ENCODE measurements at regions of chr5 and their contacts with region 1.

Region 1: DNA sequence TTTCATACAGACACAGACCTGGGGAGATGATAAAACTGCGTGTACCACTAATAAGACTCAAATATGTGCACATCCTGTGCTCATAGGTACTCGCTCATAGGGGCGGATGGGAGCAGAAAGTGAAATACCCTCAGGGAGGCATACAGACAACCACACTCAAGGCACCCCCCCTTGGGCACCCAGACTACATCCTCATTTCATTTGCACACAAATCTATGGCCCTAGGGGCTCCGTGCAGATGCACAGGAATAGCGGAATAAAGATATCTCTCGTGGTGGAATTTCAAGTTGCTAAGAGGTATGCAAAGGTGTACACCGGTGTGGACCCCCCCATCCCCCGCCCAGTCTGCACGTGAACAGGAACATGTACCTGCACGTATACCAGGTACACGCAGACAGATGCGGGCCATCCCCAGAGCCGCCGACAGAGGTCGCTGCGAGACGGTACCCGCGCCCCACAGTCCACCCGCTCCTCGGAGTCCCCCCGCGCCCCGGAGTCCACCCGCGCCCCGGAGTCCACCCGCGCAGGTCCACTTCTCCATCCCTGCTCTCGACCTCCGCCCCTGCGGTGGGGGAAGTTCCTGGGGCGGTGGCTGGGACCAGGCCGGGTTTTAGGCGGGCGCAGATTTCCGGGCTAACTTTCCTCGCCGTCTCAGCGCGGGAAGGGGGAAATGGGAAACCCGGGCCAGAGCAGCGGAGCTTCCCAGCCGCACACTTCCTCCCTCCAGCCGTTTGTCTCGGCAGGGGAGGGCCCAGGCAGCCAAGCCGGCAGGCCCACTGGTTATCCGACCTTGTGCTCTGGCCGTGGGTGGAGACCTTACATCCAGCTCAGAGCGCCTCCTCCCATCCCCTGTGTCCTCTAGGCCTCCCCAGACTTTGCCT is 1.0 kb upstream of the IL12B start:
- DNase-seq: no peak
- H3K4me3 ChIP-seq: peak overlapping the region; percentile 54
- CTCF ChIP-seq: peak; percentile 79

Region 2: GRCh38 chr5:159341914-159342313 is 10.6 kb after region 1 on chr5:
- CTCF ChIA-PET with region 1: interaction called, 11 read pairs
- POLR2A ChIA-PET with region 1: no interaction called
- DNase-seq: no peak
- H3K4me3 ChIP-seq: no peak overlapping the region
- CTCF ChIP-seq: no peak

Region 3: DNA sequence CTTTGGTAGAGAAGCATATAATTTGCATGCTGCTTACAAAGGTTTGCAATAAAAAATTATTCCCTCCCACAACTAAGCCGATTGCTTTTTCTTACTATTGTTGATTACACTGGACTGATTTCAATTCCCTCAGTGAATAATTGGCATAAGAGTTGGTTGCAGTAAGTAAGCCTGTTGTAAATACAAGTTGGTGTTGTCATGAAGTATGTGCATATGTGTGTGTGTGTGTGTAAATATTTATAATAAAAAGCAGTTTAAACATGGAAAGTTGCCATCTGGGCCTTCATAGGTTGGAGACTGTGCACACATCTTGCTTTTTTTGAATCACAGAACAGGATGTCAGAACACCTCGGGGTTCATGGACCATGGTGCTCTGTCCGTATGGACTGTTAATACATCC is 1389.5 kb after region 1 on chr5:
- CTCF ChIA-PET with region 1: no interaction called
- POLR2A ChIA-PET with region 1: no interaction called
- DNase-seq: no peak
- H3K4me3 ChIP-seq: no peak overlapping the region
- CTCF ChIP-seq: no peak